ENCODE measurements at regions of chr1 and their contacts with region 1.

Region 1: GRCh38 chr1:117059678-117060440 is at the start of gene TTF2:
- DNase-seq: peak; percentile 97
- H3K4me3 Mint-ChIP-seq: no peak within 1 kb of the TSS
- H3K27ac Mint-ChIP-seq: no peak within 1 kb of the TSS
- H3K4me1 Mint-ChIP-seq: peaks cover 46% of the 10 kb centered on the region
- H3K27me3 Mint-ChIP-seq: no peaks in the 10 kb centered on the region
- total RNA-seq, gene TTF2: 103 and 114 TPM in 2 replicates

Region 2: DNA sequence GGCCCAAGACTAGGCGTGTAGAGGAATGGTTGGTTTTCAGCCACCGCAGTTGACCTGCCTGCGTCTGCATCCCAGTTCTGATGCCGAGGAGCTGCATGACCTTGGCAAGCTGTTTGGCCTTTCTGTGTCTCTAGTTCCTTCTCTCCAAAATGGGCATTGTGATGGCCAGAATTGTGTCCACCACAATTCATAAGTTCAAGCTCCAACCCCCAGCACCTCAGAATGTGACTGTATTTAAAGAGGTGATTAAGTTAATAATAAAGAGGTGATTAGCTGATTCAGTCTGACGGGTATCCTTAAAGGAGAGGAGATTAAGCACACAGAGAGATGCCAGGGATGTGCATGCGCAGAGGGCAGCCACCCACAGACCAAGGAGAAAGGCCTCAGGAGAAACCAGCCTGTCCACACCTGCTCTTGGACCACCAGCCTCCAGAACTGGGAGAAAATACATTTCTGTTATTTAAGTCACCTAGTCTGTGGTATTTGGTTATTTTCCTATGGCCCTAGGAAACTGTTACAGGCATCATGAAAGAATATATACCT is 920.2 kb before region 1 on chr1:
- intact Hi-C with region 1: loop called (anchors 2 kb)
- DNase-seq: no peak
- H3K4me3 Mint-ChIP-seq: no peak overlapping the region
- H3K27ac Mint-ChIP-seq: no peak overlapping the region
- H3K4me1 Mint-ChIP-seq: peaks cover 12% of the 10 kb centered on the region
- H3K27me3 Mint-ChIP-seq: peaks cover 6% of the 10 kb centered on the region

Region 3: DNA sequence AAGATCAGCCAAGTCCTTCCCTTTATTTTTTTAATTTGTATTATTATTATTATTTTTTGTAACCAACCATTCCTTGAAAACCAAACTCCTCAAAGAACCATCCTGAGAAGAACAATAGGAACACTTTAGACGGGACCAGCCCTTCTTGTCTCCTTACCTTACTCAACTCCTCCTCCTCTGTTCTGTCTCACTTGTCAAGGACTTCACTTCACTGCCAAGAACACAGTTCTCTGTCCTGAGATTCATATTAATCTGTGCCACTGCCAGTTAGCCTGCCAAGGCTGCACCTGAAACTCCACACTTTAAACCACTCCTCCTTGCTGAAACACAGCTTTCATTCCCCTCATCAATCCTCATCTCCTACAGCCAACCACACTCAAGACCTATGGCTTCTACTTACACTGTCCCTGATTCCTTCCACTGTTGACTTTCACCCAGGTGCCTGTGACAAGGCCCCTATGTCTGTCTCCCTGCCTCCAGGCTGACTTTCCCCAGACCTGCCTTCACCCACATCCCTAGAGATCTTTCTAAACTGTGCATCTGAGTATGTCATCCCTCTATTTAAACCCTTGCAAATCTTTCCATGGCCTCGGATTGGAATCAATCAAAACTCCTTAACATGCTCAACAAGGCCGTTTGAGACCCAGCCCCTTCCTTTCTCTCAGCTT is 760.5 kb before region 1 on chr1:
- intact Hi-C with region 1: no loop called
- DNase-seq: no peak
- H3K4me3 Mint-ChIP-seq: no peak overlapping the region
- H3K27ac Mint-ChIP-seq: no peak overlapping the region
- H3K4me1 Mint-ChIP-seq: no peaks in the 10 kb centered on the region
- H3K27me3 Mint-ChIP-seq: peaks cover 5% of the 10 kb centered on the region

Region 4: GRCh38 chr1:116556289-116557006 is 503.4 kb before region 1 on chr1:
- intact Hi-C with region 1: loop called (anchors 1 kb)
- DNase-seq: peak; percentile 67
- H3K4me3 Mint-ChIP-seq: peak overlapping the region; percentile 9
- H3K27ac Mint-ChIP-seq: peak overlapping the region; percentile 77
- H3K4me1 Mint-ChIP-seq: peaks cover 86% of the 10 kb centered on the region
- H3K27me3 Mint-ChIP-seq: no peaks in the 10 kb centered on the region

Region 5: DNA sequence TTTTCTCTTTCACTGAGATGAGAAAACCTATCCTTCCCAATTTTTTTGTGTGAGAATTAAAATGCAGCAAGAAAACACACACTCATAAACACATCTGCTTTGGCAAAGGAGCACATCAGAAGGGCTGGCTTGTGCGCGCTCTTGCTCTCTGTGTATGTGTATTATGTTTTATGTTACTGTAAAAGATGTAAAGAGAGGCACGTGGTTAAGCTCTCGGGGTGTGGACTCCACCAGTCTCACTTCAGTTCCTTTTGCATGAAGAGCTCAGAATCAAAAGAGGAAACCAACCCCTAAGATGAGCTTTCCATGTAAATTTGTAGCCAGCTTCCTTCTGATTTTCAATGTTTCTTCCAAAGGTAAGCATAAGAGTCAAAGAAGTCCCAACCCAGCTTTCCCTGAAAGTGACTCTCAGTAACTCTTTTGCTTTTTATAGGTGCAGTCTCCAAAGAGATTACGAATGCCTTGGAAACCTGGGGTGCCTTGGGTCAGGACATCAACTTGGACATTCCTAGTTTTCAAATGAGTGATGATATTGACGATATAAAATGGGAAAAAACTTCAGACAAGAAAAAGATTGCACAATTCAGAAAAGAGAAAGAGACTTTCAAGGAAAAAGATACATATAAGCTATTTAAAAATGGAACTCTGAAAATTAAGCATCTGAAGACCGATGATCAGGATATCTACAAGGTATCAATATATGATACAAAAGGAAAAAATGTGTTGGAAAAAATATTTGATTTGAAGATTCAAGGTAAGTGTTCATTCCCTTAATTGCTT is 305.5 kb before region 1 on chr1 and contains the start of gene CD2:
- intact Hi-C with region 1: loop called (anchors 1 kb)
- DNase-seq: peak; percentile 61
- H3K4me3 Mint-ChIP-seq: peak within 1 kb of the TSS; percentile 97
- H3K27ac Mint-ChIP-seq: peak within 1 kb of the TSS; percentile 97
- H3K4me1 Mint-ChIP-seq: peaks cover 46% of the 10 kb centered on the region
- H3K27me3 Mint-ChIP-seq: no peaks in the 10 kb centered on the region
- total RNA-seq, gene CD2: 651 and 685 TPM in 2 replicates

Region 6: GRCh38 chr1:116826818-116827606 is 232.8 kb before region 1 on chr1:
- intact Hi-C with region 1: loop called (anchors 1 kb)
- DNase-seq: peak; percentile 75
- H3K4me3 Mint-ChIP-seq: peak overlapping the region; percentile 70
- H3K27ac Mint-ChIP-seq: peak overlapping the region; percentile 95
- H3K4me1 Mint-ChIP-seq: peaks cover 74% of the 10 kb centered on the region
- H3K27me3 Mint-ChIP-seq: no peaks in the 10 kb centered on the region

Region 7: DNA sequence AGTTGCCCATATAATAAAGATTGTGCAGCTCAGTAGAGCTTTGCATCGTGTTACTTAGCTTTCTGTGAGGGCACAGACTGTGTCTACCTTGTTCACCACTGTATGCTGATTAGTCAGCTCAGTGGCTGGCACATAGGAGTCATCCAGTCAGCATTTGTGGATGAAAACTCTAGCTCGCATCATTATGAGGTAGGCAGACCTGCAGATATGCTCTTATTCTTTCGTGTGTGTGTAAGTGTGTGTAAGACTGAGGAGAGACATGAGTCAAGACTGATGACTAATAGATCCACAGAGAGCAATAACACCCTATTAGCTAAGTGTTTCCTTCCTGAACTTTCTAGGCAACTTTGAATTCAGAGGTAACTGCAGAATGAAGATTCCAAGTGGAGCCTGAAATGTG is 17.4 kb after region 1 on chr1:
- intact Hi-C with region 1: loop called (anchors 1 kb)
- DNase-seq: no peak
- H3K4me3 Mint-ChIP-seq: no peak overlapping the region
- H3K27ac Mint-ChIP-seq: peak overlapping the region; percentile 75
- H3K4me1 Mint-ChIP-seq: peaks cover 22% of the 10 kb centered on the region
- H3K27me3 Mint-ChIP-seq: no peaks in the 10 kb centered on the region

Region 8: DNA sequence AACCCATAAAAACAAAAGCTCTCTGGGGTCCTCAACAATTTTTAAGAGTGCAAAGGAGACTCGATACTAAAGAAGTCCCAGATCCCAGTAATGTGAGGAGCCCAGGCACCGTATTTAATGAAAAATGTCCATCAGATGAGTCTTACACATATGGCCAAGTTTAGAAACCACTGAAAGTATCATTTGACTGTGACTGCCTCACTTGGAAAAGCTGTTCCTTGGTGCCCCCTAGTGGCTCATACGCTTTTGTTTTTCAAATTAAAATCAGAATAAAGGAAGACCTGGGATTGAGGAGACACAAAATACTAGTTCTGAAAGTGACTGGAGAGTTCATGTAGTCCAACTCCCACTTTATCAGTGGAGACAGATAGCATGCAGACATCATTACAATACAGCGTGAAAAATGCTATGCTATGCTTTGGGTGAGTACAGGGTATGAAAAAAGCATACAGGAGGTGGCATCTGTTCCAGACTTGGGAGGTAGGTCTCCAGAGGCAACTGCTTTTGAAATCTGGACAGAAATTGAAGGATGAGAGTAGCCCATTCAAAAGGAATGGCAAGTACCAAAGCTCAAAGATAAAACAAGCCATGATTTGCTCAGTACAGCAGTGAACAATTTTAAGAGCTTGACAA is 835.7 kb after region 1 on chr1:
- intact Hi-C with region 1: loop called (anchors 5 kb)
- DNase-seq: peak; percentile 32
- H3K4me3 Mint-ChIP-seq: no peak overlapping the region
- H3K27ac Mint-ChIP-seq: no peak overlapping the region
- H3K4me1 Mint-ChIP-seq: peaks cover 7% of the 10 kb centered on the region
- H3K27me3 Mint-ChIP-seq: no peaks in the 10 kb centered on the region

Region 9: GRCh38 chr1:118589238-118589846 is 1529.5 kb after region 1 on chr1:
- intact Hi-C with region 1: no loop called
- DNase-seq: no peak
- H3K4me3 Mint-ChIP-seq: no peak overlapping the region
- H3K27ac Mint-ChIP-seq: no peak overlapping the region
- H3K4me1 Mint-ChIP-seq: no peaks in the 10 kb centered on the region
- H3K27me3 Mint-ChIP-seq: peaks cover 1% of the 10 kb centered on the region